Ovary (tissue), 10 donors: ENCODE measurements at regions of chr3 and their contacts with region 1.

Region 1: GRCh38 chr3:29280404-29281093 is at the start of gene RBMS3:
- DNase-seq: peak; percentile 82 to 93 (median 90)
- H3K4me3 ChIP-seq: peak within 1 kb of the TSS; percentile 53
- H3K27ac ChIP-seq: peak within 1 kb of the TSS; percentile 72 to 79
- H3K4me1 ChIP-seq: peaks cover 4% of the 10 kb centered on the region
- H3K27me3 ChIP-seq: no peaks in the 10 kb centered on the region
- CTCF ChIP-seq: peak; percentile 56 to 63 (median 58)
- EP300 ChIP-seq: no peak
- POLR2A ChIP-seq: peak; percentile 52
- total RNA-seq, gene RBMS3: 41.7 to 79.2 (median 67.2) TPM

Region 2: DNA sequence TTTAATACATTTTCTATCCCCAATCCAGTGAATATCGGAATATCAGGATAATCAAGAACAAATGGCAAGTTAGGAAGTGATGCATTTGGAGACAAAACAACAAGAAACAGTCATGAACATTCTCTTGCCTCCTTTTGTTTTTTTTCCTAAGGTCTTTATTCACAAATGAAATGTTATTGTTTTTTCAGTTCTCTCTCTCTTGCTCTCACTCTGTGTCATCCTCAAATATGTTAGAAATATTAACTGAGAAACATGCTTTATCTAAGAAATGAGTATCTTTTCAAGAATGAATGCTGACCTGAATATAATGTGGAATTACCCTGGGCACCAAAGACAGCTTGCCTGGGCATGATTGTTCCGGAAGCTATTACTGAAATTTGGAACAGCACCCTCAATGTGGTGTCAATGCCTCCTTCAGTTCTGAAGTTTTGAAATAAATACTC is 51.7 kb after region 1 on chr3:
- intact Hi-C with region 1: loop called in 1 of 4 experiments (anchors 5 kb)
- DNase-seq: no peak
- H3K4me3 ChIP-seq: no peak overlapping the region
- H3K27ac ChIP-seq: peak overlapping the region in 1 of 2 donors; percentile 51
- H3K4me1 ChIP-seq: peaks cover 14% of the 10 kb centered on the region
- H3K27me3 ChIP-seq: no peaks in the 10 kb centered on the region
- CTCF ChIP-seq: no peak
- EP300 ChIP-seq: no peak
- POLR2A ChIP-seq: no peak

Region 3: DNA sequence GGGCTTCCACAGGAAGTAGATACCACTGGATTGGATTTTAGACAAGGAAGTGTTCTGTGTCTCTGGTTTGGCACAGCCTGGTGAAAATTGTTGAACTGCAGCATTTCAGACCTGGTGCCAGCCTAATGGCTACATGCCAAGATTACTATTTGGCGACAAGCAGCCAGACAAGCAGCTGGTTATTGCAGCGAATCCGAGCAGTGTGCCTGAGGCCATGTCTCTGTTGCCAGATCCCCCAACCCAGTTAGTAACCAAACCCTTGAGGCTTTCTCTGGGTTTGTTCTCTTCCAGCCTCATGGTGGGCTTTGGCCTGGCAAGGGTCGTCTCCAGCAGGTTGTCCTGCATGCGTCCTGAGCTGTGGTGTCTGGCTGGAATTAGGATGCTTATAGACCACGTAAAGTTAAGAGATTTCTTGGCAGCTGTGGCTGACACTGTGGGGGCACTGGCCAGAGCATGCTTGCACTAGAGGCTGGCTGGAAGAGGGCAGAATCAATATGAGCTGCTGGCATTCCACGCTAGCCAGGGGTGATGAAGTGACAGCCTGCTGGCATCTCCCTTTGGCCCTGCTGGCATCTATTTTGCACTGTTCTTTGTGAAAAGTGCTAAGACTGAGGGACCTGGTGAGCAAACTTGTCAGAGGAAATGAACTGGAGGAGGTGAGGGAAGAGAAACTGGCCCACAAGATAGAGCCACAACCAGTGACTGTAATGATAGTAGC is 172.9 kb after region 1 on chr3:
- intact Hi-C with region 1: no loop called
- DNase-seq: peak in 1 of 5 donors; percentile 15
- H3K4me3 ChIP-seq: no peak overlapping the region
- H3K27ac ChIP-seq: no peak overlapping the region
- H3K4me1 ChIP-seq: peaks cover 6% of the 10 kb centered on the region
- H3K27me3 ChIP-seq: no peaks in the 10 kb centered on the region
- CTCF ChIP-seq: no peak
- EP300 ChIP-seq: no peak
- POLR2A ChIP-seq: no peak

Region 4: DNA sequence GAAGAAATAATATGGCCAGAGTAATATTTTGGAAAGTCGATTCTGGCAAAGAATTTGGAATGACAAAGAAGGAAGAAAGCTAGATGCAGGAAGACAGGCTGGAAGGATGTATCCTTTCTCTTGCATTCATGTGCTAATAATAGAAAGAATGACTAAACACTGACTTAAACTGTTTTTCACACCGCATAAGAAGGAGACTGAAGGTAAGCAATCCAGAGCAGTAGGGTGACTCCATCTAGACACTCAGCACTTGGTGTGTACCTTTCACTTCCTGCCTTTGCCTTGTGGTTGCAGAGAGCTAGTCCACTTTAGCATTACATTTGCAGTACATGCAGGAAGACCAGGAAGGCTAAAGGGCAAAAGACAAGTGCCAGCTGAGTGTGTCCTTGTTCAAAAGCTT is 234.9 kb after region 1 on chr3:
- intact Hi-C with region 1: loop called in 1 of 4 experiments (anchors 10 kb)
- DNase-seq: no peak
- H3K4me3 ChIP-seq: no peak overlapping the region
- H3K27ac ChIP-seq: no peak overlapping the region
- H3K4me1 ChIP-seq: peaks cover 2% of the 10 kb centered on the region
- H3K27me3 ChIP-seq: no peaks in the 10 kb centered on the region
- CTCF ChIP-seq: no peak
- EP300 ChIP-seq: no peak
- POLR2A ChIP-seq: no peak

Region 5: GRCh38 chr3:29759411-29760225 is 479.1 kb after region 1 on chr3:
- intact Hi-C with region 1: loop called in 2 of 4 experiments (anchors 10 kb)
- DNase-seq: no peak
- H3K4me3 ChIP-seq: no peak overlapping the region
- H3K27ac ChIP-seq: no peak overlapping the region
- H3K4me1 ChIP-seq: peaks cover 2% of the 10 kb centered on the region
- H3K27me3 ChIP-seq: no peaks in the 10 kb centered on the region
- CTCF ChIP-seq: no peak
- EP300 ChIP-seq: no peak
- POLR2A ChIP-seq: no peak

Region 6: DNA sequence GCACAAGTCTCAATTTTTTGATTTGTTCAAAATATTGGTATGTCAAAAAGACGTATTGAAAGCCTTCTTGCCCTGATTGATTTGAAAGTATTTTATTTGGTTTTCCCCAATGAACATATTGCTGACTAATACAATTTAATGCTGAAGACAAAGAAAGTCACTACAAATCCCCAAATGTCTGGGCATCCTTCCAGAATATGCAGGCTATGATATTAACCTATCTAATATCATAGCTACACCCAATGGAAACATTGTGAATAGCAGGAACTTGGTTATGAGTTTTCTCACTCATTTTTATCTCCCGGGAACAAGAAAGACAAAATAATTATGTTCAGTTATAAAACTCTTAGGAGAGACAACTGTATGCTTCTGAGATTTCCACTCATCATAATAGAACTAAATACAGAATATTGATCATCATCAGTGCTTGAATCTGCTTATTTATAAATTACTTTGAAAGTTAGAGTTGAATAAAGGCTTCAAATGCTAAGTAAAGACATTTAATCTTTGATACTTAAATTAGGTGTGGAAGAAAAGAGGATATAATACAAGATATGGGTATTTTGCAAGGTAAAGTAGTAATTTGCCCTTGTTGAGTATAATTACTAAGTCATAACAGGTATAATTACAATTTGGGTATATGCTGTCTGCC is 484.2 kb after region 1 on chr3:
- intact Hi-C with region 1: loop called in 2 of 4 experiments (anchors 10 kb)
- DNase-seq: peak in 3 of 5 donors; percentile 15 to 34 (median 28)
- H3K4me3 ChIP-seq: no peak overlapping the region
- H3K27ac ChIP-seq: no peak overlapping the region
- H3K4me1 ChIP-seq: no peaks in the 10 kb centered on the region
- H3K27me3 ChIP-seq: no peaks in the 10 kb centered on the region
- CTCF ChIP-seq: peak; percentile 18 to 85 (median 70)
- EP300 ChIP-seq: no peak
- POLR2A ChIP-seq: no peak